ENCODE measurements at regions of chrX and their contacts with region 1.

Region 1: GRCh38 chrX:74286950-74287740 is 16.8 kb upstream of the ZCCHC13 start:
- DNase-seq: no peak
- ATAC-seq: no peak
- H3K4me3 ChIP-seq: no peak overlapping the region
- H3K4me3 Mint-ChIP-seq: no peak overlapping the region
- H3K27ac ChIP-seq: no peak overlapping the region
- H3K27ac Mint-ChIP-seq: no peak overlapping the region
- H3K4me1 ChIP-seq: peaks cover 7% of the 10 kb centered on the region
- H3K4me1 Mint-ChIP-seq: peaks cover 38% of the 10 kb centered on the region
- H3K27me3 ChIP-seq: no peaks in the 10 kb centered on the region
- H3K27me3 Mint-ChIP-seq: no peaks in the 10 kb centered on the region
- CTCF ChIP-seq: no peak

Region 2: GRCh38 chrX:74232859-74233258 is 54.3 kb before region 1 on chrX:
- CTCF ChIA-PET with region 1: no interaction called
- POLR2A ChIA-PET with region 1: no interaction called
- intact Hi-C with region 1: loop called in 1 of 2 experiments (anchors 10 kb)
- DNase-seq: peak in 2 of 9 experiments; percentile 1
- ATAC-seq: no peak
- H3K4me3 ChIP-seq: no peak overlapping the region
- H3K4me3 Mint-ChIP-seq: no peak overlapping the region
- H3K27ac ChIP-seq: no peak overlapping the region
- H3K27ac Mint-ChIP-seq: no peak overlapping the region
- H3K4me1 ChIP-seq: no peaks in the 10 kb centered on the region
- H3K4me1 Mint-ChIP-seq: peaks cover 8% of the 10 kb centered on the region
- H3K27me3 ChIP-seq: no peaks in the 10 kb centered on the region
- H3K27me3 Mint-ChIP-seq: no peaks in the 10 kb centered on the region
- CTCF ChIP-seq: no peak

Measured in CD8-positive, alpha-beta T cell (primary cell).